H1 (cell line): ENCODE measurements at regions of chr4 and their contacts with region 1.

Region 1: GRCh38 chr4:3442959-3443749 is 1.4 kb downstream of the HGFAC start:
- DNase-seq: peak in 1 of 2 experiments; percentile 93
- H3K4me3 ChIP-seq: no peak overlapping the region
- H3K27ac ChIP-seq: no peak overlapping the region
- H3K4me1 ChIP-seq: no peaks in the 10 kb centered on the region
- H3K27me3 ChIP-seq: no peaks in the 10 kb centered on the region
- CTCF ChIP-seq: peak in 2 of 3 experiments; percentile 96 to 97; a peak in 3 of 4 replicates
- EP300 ChIP-seq: no peak
- POLR2A ChIP-seq: no peak
- RAD21 ChIP-seq: peak; percentile 96 to 97

Region 2: DNA sequence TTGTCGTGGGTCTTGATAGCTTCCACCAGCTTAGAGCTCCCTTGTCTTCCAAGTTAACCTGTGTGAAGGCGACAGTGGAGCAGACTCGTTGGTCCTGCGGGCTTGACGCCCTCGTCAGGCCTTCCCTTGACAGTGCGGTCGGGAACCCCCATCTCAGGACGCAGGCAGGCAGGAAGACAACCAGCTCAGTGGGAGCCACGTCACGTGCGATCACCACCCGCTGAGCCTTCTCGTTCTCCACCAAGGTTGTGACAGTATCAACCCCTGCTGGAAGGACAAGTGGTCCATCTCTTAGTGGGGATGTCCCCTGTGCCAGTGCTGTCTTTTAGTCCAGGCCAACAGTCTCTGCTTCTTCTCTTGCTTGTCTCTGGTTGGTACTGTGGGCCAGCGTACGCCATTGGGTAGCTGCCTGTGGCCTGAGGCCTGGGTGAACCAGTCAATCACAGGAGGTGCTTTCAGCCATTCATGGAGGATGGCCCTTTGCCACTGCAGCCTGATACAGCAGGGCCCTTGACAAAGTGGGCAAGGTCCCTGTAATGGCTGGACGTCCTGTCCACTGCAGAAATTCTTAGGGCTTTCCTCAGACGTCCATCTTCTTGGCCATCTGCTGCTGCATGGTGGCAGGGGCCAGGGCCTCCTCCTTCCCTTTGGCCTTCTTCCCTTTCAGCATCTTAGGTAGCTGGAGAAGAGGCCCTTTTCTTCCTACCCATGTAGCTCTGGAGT is 118.9 kb before region 1 on chr4:
- CTCF ChIA-PET with region 1: interaction called, 37 read pairs
- POLR2A ChIA-PET with region 1: no interaction called
- DNase-seq: peak; percentile 49 to 80
- H3K4me3 ChIP-seq: no peak overlapping the region
- H3K27ac ChIP-seq: no peak overlapping the region
- H3K4me1 ChIP-seq: peaks cover 0 to 8% (median 5%) of the 10 kb centered on the region in 4 experiments; a peak in 3 of 7 replicates
- H3K27me3 ChIP-seq: no peaks in the 10 kb centered on the region
- CTCF ChIP-seq: peak in 2 of 3 experiments; percentile 61 to 89; a peak in 3 of 4 replicates
- EP300 ChIP-seq: no peak
- POLR2A ChIP-seq: no peak
- RAD21 ChIP-seq: peak; percentile 69 to 77

Region 3: DNA sequence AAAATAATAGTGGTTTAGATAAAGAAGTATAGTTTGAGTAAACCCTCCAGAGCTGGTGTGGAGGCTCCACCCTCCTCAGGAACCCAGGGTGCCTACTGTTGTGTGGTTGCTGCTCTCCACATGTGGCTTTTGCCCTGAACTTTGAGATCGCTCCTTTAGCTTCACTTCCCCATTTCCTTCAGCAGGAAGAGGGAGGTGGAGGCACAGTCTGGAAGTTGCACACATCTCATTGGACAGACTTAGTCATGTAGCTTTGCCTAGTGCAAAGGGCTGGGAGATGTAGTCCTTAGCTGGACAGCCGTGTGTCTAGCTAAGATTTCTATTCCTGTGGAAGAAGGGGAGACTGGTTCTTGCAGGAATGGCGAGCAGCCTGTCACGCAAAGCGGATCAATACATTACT is 112.4 kb before region 1 on chr4:
- CTCF ChIA-PET with region 1: interaction called, 23 read pairs
- POLR2A ChIA-PET with region 1: no interaction called
- DNase-seq: no peak
- H3K4me3 ChIP-seq: no peak overlapping the region
- H3K27ac ChIP-seq: no peak overlapping the region
- H3K4me1 ChIP-seq: peaks cover 0 to 2% (median 0%) of the 10 kb centered on the region in 4 experiments; a peak in 3 of 7 replicates
- H3K27me3 ChIP-seq: no peaks in the 10 kb centered on the region
- CTCF ChIP-seq: no peak
- EP300 ChIP-seq: no peak
- POLR2A ChIP-seq: no peak
- RAD21 ChIP-seq: no peak

Region 4: DNA sequence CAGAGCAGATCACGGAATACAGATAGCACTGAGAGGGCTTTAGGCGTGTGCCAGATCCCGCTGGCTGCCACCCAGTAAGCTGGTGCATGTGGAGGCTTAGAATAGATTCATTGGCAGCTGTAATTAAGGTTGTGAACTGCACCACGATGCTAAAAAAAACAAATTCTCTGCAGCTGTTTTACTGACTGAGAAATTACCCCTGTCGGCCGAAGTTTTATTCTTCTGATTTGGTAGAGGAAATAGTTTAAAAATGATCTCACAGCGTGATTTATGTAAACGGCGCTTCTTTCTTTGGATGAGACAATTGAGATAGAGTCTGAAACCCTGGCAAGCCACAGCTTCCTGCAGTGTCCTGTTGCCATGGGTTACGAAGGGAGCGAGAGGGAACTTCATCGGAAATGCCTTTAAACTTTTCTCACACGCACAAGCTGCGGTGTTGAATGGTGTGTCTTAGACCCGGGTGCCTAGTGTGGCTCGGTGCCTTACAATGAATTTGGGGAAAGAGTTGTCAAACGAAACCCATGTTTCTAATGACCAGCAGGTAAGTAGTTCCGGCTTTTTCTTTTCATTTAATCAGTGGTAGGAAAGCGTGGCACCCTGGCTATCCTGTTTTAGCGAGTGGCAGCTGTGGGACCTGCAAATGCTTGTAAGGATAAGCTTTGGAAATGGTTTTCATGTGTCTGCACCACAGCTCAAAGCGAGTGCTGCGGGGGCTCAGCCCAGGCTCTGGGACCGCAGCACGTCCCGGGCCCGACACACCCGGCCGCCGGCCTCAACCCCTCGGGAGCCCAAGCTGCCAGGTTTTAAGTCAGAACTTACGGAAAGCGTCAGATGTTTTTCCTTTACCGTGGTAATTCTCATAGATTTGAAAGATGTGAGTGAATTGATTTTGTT is 73.1 kb before region 1 on chr4:
- CTCF ChIA-PET with region 1: interaction called, 11 read pairs
- POLR2A ChIA-PET with region 1: no interaction called
- DNase-seq: peak in 1 of 2 experiments; percentile 54
- H3K4me3 ChIP-seq: peak overlapping the region in 3 of 4 experiments; percentile 8 to 47 (median 14); a peak in 5 of 8 replicates
- H3K27ac ChIP-seq: no peak overlapping the region
- H3K4me1 ChIP-seq: peaks cover 7 to 33% (median 21%) of the 10 kb centered on the region in 4 experiments
- H3K27me3 ChIP-seq: peaks cover 0 to 13% (median 10%) of the 10 kb centered on the region in 4 experiments; a peak in 3 of 7 replicates
- CTCF ChIP-seq: no peak
- EP300 ChIP-seq: no peak
- POLR2A ChIP-seq: no peak
- RAD21 ChIP-seq: no peak

Region 5: DNA sequence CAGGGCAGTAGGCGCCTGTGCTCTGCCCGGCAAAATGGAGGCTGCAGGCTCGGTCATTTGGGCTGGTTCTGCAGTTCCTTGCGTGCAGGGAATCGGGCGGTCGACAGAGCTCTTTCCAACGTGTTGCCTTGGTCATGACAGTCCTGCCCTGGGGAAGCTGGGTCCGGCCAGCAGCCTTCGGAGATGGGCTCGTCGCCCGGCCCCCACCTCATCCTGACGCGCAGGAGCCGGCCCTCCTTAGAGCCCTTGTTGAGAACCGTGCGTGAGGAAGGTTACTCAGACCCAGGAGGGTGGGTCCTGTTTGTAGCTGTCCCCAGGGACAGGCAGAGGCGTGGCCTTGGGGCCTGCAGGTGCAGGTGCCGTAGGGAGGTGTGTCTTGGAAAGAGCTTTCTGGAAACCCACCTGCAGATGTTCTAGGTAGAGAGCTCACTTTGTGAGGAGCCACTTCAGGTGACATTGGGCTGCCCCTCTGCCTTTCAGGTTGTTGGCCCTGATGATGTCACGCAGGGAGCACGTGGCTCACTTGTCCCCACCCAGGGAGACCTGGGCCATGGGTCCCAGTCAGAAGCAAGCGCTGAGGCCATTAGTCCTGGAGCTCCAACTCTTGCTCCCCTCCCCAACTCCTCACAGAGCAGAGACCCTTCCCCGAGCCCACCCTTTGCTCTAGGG is 16.6 kb before region 1 on chr4:
- CTCF ChIA-PET with region 1: interaction called, 10 read pairs
- POLR2A ChIA-PET with region 1: interaction called, 3 read pairs
- DNase-seq: no peak
- H3K4me3 ChIP-seq: no peak overlapping the region
- H3K27ac ChIP-seq: no peak overlapping the region
- H3K4me1 ChIP-seq: no peaks in the 10 kb centered on the region; a peak in 1 of 7 replicates
- H3K27me3 ChIP-seq: no peaks in the 10 kb centered on the region; a peak in 1 of 7 replicates
- CTCF ChIP-seq: no peak
- EP300 ChIP-seq: no peak
- POLR2A ChIP-seq: no peak
- RAD21 ChIP-seq: no peak

Region 6: GRCh38 chr4:3461478-3462291 is 18.5 kb after region 1 on chr4:
- CTCF ChIA-PET with region 1: interaction called, 10 read pairs
- POLR2A ChIA-PET with region 1: no interaction called
- DNase-seq: no peak
- H3K4me3 ChIP-seq: no peak overlapping the region
- H3K27ac ChIP-seq: no peak overlapping the region
- H3K4me1 ChIP-seq: peaks cover 0 to 6% (median 0%) of the 10 kb centered on the region in 4 experiments; a peak in 1 of 7 replicates
- H3K27me3 ChIP-seq: peaks cover 5 to 66% (median 39%) of the 10 kb centered on the region in 4 experiments
- CTCF ChIP-seq: no peak
- EP300 ChIP-seq: no peak
- POLR2A ChIP-seq: no peak
- RAD21 ChIP-seq: no peak

Region 7: DNA sequence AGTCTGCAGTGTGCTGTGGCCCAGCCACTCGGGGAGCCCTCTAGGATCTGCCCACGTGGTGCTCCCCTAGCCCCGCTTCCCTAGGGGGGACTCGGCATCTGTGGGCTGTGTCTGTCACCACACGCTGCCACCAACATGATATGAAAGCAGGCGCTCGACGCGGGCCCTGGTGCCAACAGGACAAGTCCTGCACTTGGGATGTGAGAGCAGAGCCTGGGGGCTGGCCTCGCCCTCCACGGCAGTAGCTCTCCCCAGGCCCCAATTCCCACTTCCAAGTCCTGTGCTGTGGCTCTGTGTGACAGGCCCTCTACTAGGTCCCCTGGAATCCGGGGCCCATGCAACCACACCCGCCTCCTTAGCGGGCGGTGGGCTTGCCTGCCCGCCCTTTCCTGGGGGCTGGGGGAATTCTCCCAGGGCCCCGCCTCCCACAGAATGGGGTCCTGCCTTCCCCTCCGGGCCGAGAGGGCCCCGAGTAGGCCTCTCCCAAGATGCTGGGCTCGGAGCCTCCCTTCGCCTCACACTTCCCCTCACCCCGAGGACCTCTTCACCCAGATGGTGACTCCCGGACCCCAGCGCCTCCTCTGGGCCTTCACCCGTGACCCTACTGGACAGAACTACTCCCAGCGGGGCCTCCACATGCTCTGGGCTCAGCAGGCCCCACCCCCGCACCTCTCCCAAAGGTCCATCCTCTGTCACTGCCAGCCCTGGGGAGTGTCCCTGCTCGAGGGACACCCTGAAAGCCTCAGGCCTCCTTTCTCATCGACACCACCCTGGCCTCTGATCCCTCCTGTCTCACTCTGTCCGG is 77.8 kb after region 1 on chr4:
- CTCF ChIA-PET with region 1: no interaction called
- POLR2A ChIA-PET with region 1: no interaction called
- DNase-seq: no peak
- H3K4me3 ChIP-seq: no peak overlapping the region
- H3K27ac ChIP-seq: no peak overlapping the region
- H3K4me1 ChIP-seq: no peaks in the 10 kb centered on the region
- H3K27me3 ChIP-seq: no peaks in the 10 kb centered on the region
- CTCF ChIP-seq: no peak
- EP300 ChIP-seq: no peak
- POLR2A ChIP-seq: no peak
- RAD21 ChIP-seq: no peak